ENCODE measurements at regions of chr1 and their contacts with region 1.

Region 1: DNA sequence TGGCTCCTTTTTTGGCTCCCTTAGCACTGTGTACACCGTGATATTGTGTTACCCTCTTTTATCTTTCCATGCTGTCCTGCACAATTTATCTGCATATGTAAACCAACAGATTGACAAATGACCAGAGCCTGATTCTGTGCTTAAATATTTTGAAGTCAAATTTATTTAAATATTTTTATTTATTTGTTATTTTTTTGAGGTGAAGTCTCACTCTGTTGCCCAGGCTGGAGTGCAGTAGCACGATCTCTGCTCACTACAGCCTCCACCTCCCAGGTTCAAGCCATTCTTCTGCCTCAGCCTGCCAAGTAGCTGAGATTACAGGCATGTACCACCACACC is 12.8 kb downstream of the PMF1 start:
- DNase-seq: no peak

Region 2: DNA sequence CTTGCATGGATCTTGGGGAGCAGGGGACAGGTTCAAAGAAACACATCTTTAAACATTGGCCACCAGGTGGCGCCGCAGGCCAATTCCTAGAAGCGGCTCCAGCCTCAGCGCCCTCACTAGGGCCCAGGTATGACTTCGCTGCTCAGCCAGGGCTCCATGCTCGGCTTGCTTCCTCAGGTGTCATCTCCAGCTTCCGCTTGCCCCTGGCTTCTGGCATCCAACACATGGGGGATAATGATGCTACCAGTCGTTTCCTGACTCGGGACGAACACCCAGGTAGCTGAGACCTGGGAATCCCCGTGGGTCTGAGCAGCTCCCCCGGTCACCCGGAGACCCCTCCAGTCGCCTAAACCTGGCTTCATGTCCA is 134.8 kb before region 1 on chr1:
- intact Hi-C with region 1: loop called (anchors 1 kb)
- DNase-seq: peak; percentile 93

Region 3: DNA sequence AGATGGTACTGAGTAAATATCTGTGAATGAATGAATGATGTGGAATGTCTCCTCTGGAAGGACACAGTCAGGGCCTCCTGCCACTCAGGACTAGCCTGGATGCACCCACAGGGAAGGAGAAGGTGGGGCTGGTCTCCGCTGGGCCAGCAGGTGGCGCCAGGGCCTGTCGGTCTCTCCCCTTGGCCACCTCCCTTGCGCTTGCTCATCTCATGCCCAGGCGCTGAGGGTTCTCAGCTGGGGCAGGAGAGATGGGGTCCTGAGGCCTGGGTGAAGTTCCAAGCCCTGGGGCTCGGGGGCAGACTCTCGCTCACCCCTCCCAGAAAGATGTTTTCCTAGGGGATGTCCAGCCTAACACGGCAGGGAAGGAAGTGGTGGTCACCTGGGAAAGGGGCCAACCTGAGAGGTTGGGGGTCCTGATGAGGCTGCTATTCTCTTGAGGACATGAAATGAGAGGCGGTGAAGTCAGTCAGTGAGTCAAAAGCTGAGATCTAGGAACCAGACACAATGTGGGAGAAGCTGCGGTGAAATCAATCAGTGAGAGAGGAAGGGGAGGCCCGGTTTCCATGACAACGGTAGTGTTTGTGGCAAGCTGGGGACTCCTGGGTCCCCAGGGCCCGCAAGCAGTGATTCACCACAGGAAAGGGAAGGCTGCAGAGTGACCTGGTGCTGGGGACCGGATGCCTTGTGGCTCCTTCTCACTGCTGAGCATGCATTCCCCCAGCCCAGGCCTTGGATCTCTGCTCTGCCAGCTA is 128.8 kb before region 1 on chr1:
- intact Hi-C with region 1: loop called (anchors 1 kb)
- DNase-seq: peak; percentile 93

Region 4: DNA sequence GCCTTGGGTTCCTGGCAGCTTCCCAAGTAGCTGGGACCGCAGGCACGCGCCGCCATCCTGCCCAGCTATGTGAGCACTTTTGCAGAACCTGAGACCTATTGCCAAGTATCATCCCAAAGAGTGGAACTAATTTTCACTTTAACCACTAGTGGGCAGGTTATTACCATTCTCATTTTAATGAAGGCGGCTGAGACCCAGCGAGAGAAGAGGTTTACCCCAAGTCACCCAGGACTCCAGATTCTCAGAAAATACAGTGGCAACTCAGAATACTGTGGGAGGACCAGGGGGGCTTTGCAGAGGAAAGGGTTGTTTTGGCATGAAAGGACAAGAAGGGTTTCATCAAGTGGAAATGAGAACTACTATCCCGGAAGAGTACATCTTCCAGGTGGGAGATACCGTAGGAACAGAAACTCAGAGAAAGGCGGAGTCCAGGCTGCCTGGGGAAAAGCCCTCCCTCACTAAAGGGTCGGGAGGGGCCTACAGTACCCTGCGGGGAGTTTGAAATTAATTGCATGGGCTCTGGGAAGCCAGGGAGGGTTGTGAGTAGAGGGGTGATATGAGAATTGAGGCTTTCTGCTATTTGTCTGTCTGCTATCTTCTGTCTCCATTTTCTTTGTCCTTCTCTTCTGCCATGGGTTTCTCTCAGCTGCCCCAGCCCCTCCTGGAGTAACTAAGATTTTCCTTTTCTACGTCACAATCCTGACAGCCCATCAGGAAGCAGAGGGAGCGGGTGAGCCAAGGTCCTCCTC is 79.5 kb before region 1 on chr1:
- intact Hi-C with region 1: loop called (anchors 2 kb)
- DNase-seq: no peak

Region 5: GRCh38 chr1:156198831-156199349 is 26.8 kb before region 1 on chr1:
- intact Hi-C with region 1: no loop called
- DNase-seq: no peak

Measured in cardiac septum (tissue), 1 donor.